CD4-positive, alpha-beta T cell (primary cell): ENCODE measurements at regions of chr2 and their contacts with region 1.

Region 1: DNA sequence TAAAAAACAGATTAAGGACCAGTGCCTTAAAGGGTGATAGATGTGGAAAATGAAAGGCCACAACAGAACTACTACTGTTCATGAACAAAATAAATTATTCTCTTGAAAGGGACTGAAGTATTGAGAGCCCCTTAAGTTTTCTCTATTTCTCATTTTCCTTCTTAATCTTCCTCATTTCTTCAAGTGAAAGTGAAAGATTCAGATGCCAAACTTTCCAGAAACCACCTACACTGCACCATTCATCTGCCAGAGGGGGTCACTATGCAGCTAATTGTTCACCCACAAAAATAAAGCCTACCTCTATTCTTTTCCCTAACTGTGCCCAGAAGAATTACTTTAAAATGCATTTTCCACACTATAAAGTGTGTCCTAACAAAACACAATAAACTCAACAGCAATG is 140.1 kb downstream of the NR4A2 start:
- DNase-seq: peak in 3 of 14 experiments; percentile 3 to 21 (median 21)
- ATAC-seq: no peak
- H3K4me3 ChIP-seq: no peak overlapping the region
- H3K4me3 Mint-ChIP-seq: no peak overlapping the region
- H3K27ac ChIP-seq: no peak overlapping the region
- H3K27ac Mint-ChIP-seq: no peak overlapping the region
- H3K4me1 ChIP-seq: no peaks in the 10 kb centered on the region
- H3K4me1 Mint-ChIP-seq: no peaks in the 10 kb centered on the region
- H3K27me3 ChIP-seq: no peaks in the 10 kb centered on the region
- H3K27me3 Mint-ChIP-seq: no peaks in the 10 kb centered on the region
- CTCF ChIP-seq: no peak

Region 2: GRCh38 chr2:156057647-156058046 is 134.8 kb before region 1 on chr2:
- CTCF ChIA-PET with region 1: no interaction called
- POLR2A ChIA-PET with region 1: no interaction called
- intact Hi-C with region 1: no loop called
- DNase-seq: no peak
- ATAC-seq: no peak
- H3K4me3 ChIP-seq: no peak overlapping the region
- H3K4me3 Mint-ChIP-seq: no peak overlapping the region
- H3K27ac ChIP-seq: no peak overlapping the region
- H3K27ac Mint-ChIP-seq: no peak overlapping the region
- H3K4me1 ChIP-seq: no peaks in the 10 kb centered on the region
- H3K4me1 Mint-ChIP-seq: no peaks in the 10 kb centered on the region
- H3K27me3 ChIP-seq: no peaks in the 10 kb centered on the region
- H3K27me3 Mint-ChIP-seq: no peaks in the 10 kb centered on the region
- CTCF ChIP-seq: no peak

Region 3: GRCh38 chr2:156319811-156320485 is 127.5 kb after region 1 on chr2:
- CTCF ChIA-PET with region 1: no interaction called
- POLR2A ChIA-PET with region 1: no interaction called
- intact Hi-C with region 1: loop called in 1 of 2 experiments (anchors 10 kb)
- DNase-seq: peak in 2 of 14 experiments; percentile 41 to 45
- ATAC-seq: no peak
- H3K4me3 ChIP-seq: no peak overlapping the region
- H3K4me3 Mint-ChIP-seq: peak overlapping the region; percentile 5
- H3K27ac ChIP-seq: no peak overlapping the region
- H3K27ac Mint-ChIP-seq: no peak overlapping the region
- H3K4me1 ChIP-seq: peaks cover 36% of the 10 kb centered on the region
- H3K4me1 Mint-ChIP-seq: peaks cover 40% of the 10 kb centered on the region
- H3K27me3 ChIP-seq: peaks cover 53 to 73% of the 10 kb centered on the region in 2 experiments
- H3K27me3 Mint-ChIP-seq: peaks cover 87% of the 10 kb centered on the region
- CTCF ChIP-seq: no peak

Region 4: DNA sequence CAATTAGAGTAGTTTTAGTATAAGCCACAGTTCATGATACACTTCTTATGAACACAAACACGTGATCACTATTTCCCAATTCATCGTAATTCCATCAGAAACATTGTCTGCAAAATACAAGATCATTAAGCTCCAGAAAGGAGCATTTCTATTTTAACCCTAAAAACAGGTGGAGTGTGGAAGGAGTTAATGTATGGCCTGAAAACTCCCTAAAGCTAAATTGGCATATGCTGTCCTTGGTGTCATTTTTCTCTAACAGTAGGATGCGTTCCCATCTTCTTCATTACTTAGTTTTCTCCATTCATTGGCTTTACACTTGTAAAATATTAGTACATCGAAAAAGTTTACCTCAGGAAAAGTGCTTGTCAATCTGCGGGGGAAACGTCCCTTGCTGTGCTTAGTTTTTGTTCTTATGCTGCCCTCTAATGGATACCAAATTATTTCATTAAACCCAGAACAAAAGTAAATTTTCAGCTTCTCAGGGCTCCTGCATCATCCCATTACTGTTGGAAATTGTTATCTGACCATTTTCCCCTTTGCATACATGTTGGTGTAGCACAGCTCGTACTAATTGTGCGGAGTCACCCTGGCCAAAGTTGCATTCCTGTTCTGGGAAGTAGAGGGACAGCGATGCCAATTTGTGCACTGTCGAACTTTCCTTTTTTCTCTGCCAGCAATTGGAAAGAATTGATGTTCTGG is 397.1 kb after region 1 on chr2:
- CTCF ChIA-PET with region 1: interaction called, 3 read pairs
- POLR2A ChIA-PET with region 1: no interaction called
- intact Hi-C with region 1: loop called (anchors 1 to 5 kb)
- DNase-seq: peak in 7 of 14 experiments; percentile 0 to 65 (median 19)
- ATAC-seq: peak; percentile 58
- H3K4me3 ChIP-seq: no peak overlapping the region
- H3K4me3 Mint-ChIP-seq: no peak overlapping the region
- H3K27ac ChIP-seq: no peak overlapping the region
- H3K27ac Mint-ChIP-seq: no peak overlapping the region
- H3K4me1 ChIP-seq: no peaks in the 10 kb centered on the region
- H3K4me1 Mint-ChIP-seq: peaks cover 5% of the 10 kb centered on the region
- H3K27me3 ChIP-seq: no peaks in the 10 kb centered on the region
- H3K27me3 Mint-ChIP-seq: no peaks in the 10 kb centered on the region
- CTCF ChIP-seq: peak; percentile 78